Activated naive CD4-positive, alpha-beta T cell treated with anti-CD3 and anti-CD28 coated beads for 36 hours (primary cell): ENCODE measurements at regions of chr15 and their contacts with region 1.

Region 1: GRCh38 chr15:29570931-29571791 is 251.1 kb downstream of the TJP1 start:
- DNase-seq: peak; percentile 10
- H3K4me3 Mint-ChIP-seq: peak overlapping the region; percentile 24
- H3K27ac Mint-ChIP-seq: peak overlapping the region; percentile 13
- H3K4me1 Mint-ChIP-seq: peaks cover 10% of the 10 kb centered on the region
- H3K27me3 Mint-ChIP-seq: peaks cover 65% of the 10 kb centered on the region

Region 2: GRCh38 chr15:29139540-29140459 is 431.4 kb before region 1 on chr15:
- CTCF ChIA-PET with region 1: no interaction called
- intact Hi-C with region 1: loop called (anchors 10 kb)
- DNase-seq: peak; percentile 66
- H3K4me3 Mint-ChIP-seq: peak overlapping the region; percentile 9
- H3K27ac Mint-ChIP-seq: no peak overlapping the region
- H3K4me1 Mint-ChIP-seq: peaks cover 9% of the 10 kb centered on the region
- H3K27me3 Mint-ChIP-seq: peaks cover 48% of the 10 kb centered on the region

Region 3: GRCh38 chr15:29550834-29551465 is 20.2 kb before region 1 on chr15:
- CTCF ChIA-PET with region 1: no interaction called
- intact Hi-C with region 1: no loop called
- DNase-seq: no peak
- H3K4me3 Mint-ChIP-seq: no peak overlapping the region
- H3K27ac Mint-ChIP-seq: no peak overlapping the region
- H3K4me1 Mint-ChIP-seq: no peaks in the 10 kb centered on the region
- H3K27me3 Mint-ChIP-seq: peaks cover 8% of the 10 kb centered on the region